Activated CD4-positive, alpha-beta memory T cell treated with anti-CD3 and anti-CD28 coated beads for 36 hours (primary cell): ENCODE measurements at regions of chr17 and their contacts with region 1.

Region 1: DNA sequence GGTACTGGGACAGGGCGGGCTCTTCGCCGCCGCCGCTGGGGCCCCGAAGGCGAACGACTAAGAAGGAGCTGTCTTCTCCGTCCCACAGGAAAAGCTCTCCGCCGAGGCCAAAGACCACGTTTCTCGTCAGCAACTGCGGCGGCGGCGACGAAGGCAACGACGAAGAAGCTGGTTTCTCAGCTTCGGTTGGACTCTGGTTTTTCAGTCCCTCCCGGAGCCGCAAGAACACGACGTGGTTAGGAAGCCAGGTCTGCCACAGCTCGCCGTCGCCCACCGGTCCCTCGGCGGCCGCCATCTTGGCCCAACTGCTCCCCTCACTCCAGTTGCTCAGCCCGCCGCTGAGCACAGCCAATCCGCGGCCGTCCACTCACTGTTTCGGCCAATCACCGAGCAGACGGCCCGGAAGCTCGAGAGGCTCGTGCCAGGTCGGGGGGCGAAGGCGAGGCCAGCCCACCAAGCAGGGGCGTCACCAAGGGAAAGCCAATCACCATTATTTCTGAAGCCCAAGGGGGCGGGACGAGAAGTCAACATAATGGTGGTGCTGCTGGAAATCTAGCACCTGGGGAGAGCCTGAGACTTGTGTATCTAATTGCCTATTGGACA is at the start of gene NUP88:
- DNase-seq: peak; percentile 98
- H3K4me3 Mint-ChIP-seq: peak within 1 kb of the TSS; percentile 99
- H3K27ac Mint-ChIP-seq: peak within 1 kb of the TSS; percentile 98
- H3K4me1 Mint-ChIP-seq: peaks cover 50% of the 10 kb centered on the region
- H3K27me3 Mint-ChIP-seq: no peaks in the 10 kb centered on the region
- total RNA-seq, gene NUP88: 110 to 113 TPM

Region 2: DNA sequence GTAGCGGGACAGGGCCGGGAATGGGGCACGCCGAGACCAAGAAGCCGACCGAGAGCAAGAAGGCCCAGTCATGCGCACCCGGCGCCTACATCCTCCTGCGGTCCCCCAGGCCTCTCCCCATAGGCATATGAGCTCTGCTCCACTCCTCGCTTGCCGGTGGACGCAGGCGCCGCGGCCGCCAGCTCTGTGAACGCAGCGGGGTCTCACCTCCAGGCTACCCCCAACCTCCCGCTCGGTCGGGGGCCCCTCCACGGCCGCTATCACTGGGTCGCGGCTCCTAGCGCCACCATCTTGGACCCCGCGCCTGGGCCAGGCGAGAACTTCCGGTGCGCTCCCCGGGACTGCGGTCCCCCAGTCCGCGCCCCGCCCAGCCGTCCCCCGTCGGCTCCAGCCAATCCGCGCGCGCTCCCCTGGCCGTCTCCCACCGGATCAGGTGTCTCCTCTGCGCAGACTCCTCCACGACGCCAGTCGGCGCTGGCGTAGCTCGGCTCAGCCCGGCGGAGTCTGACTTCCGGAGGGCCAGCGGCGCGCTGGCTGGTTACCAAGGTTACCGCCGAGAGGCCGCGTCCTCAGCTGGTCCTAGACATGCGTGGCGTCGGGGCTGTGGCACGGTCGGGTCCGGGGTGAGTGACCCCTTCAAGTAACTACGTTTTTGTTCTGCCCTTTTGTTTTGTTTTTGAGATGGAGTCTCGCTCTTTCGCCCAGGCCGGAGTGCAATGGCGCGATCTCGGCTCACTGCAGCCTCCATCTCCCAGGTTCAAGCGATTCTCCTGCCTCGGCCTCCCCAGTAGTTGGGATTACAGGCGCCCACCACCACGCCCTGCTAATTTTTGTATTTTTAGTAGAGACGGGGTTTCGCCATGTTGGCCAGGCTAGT is 227.7 kb before region 1 on chr17 and contains the start of gene ZNF594:
- CTCF ChIA-PET with region 1: no interaction called
- POLR2A ChIA-PET with region 1: no interaction called
- intact Hi-C with region 1: loop called (anchors 5 kb)
- DNase-seq: peak; percentile 99
- H3K4me3 Mint-ChIP-seq: peak within 1 kb of the TSS; percentile 95
- H3K27ac Mint-ChIP-seq: peak within 1 kb of the TSS; percentile 52
- H3K4me1 Mint-ChIP-seq: peaks cover 20% of the 10 kb centered on the region
- H3K27me3 Mint-ChIP-seq: no peaks in the 10 kb centered on the region
- total RNA-seq, gene ZNF594: 5.3 to 6.2 TPM

Region 3: DNA sequence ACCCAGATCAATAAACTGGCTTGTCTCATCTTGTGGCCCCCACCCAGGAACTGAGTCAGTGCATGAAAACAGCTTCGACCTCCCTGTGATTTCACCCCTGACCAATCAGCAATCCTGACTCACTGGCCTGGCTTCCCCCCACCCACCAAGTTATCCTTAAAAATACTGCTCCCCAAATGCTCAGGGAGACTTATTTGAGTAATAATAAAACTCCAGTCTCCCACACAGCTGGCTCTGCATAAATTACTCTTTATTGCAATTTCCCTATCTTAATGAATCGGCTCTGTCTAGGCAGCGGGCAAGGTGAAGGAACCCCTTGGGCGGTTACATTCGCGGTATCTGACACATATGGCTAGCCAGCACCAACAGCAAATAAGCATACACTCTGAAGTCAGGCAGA is 147.1 kb before region 1 on chr17:
- CTCF ChIA-PET with region 1: no interaction called
- POLR2A ChIA-PET with region 1: no interaction called
- intact Hi-C with region 1: loop called (anchors 5 kb)
- DNase-seq: peak; percentile 76
- H3K4me3 Mint-ChIP-seq: peak overlapping the region; percentile 25
- H3K27ac Mint-ChIP-seq: peak overlapping the region; percentile 46
- H3K4me1 Mint-ChIP-seq: peaks cover 14% of the 10 kb centered on the region
- H3K27me3 Mint-ChIP-seq: peaks cover 3% of the 10 kb centered on the region

Region 4: GRCh38 chr17:5468075-5468473 is 48.6 kb after region 1 on chr17:
- CTCF ChIA-PET with region 1: no interaction called
- POLR2A ChIA-PET with region 1: no interaction called
- intact Hi-C with region 1: loop called (anchors 5 kb)
- DNase-seq: peak; percentile 30
- H3K4me3 Mint-ChIP-seq: peak overlapping the region; percentile 85
- H3K27ac Mint-ChIP-seq: peak overlapping the region; percentile 40
- H3K4me1 Mint-ChIP-seq: peaks cover 40% of the 10 kb centered on the region
- H3K27me3 Mint-ChIP-seq: no peaks in the 10 kb centered on the region